HEK293 (cell line): ENCODE measurements at regions of chr17 and their contacts with region 1.

Region 1: DNA sequence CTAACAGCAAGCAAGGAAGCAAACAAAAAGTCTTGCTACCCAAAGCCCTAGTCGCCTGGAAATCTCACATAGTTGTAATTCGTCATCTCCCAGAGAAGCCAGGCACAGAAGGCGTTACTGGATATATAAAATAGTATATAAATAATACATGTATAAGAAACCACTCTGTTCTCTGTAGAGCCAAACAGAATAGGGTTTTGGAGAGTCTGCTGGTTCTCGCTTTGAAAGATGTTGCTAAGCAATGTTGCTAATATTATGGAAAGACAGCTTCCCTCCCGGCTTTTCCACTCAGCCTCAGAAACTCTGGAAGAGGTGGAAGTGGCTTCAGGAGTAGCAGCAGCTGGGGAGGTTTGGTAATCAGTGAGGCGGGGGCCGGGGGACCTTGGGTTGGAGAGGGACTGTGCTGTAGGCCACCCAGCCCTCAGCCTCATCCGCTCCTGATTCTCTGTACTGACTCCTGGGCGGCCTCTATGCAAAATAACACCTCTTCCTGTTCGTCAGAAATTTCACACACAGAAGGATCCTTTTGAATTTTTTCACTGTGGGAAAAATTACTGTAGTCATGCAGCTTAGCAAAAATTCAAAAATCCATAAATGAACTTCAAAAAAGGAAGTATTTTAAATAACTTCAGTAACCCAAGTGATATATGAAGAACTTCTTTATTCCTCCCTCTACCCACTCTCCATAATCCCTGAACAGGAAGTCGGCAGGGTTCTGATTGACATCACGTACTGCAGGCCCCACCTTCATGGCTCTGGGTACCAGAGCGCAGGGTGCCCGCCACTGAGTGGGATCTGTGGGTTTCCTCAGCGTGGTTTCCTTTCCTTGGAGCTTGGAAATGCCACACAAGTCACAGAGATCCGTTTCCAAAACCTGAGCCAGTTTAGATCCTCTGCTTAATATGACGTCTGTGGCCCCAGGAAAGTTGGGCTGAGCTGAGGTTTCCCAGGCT is 51.4 kb downstream of the RAP1GAP2 start:
- H3K4me3 ChIP-seq: no peak overlapping the region
- H3K27ac ChIP-seq: no peak overlapping the region
- H3K4me1 ChIP-seq: no peaks in the 10 kb centered on the region
- CTCF ChIP-seq: no peak

Region 2: GRCh38 chr17:2828397-2829038 is 19.1 kb before region 1 on chr17:
- CTCF ChIA-PET with region 1: interaction called, 17 read pairs
- POLR2A ChIA-PET with region 1: interaction called, 3 read pairs
- H3K4me3 ChIP-seq: no peak overlapping the region
- H3K27ac ChIP-seq: no peak overlapping the region
- H3K4me1 ChIP-seq: no peaks in the 10 kb centered on the region
- CTCF ChIP-seq: peak; percentile 94

Region 3: GRCh38 chr17:2860045-2860444 is 12.4 kb after region 1 on chr17:
- CTCF ChIA-PET with region 1: interaction called, 22 read pairs
- POLR2A ChIA-PET with region 1: interaction called, 3 read pairs
- H3K4me3 ChIP-seq: no peak overlapping the region
- H3K27ac ChIP-seq: no peak overlapping the region
- H3K4me1 ChIP-seq: no peaks in the 10 kb centered on the region
- CTCF ChIP-seq: no peak

Region 4: GRCh38 chr17:2929881-2930533 is 82.3 kb after region 1 on chr17:
- CTCF ChIA-PET with region 1: interaction called, 94 read pairs
- POLR2A ChIA-PET with region 1: interaction called, 6 read pairs
- H3K4me3 ChIP-seq: no peak overlapping the region
- H3K27ac ChIP-seq: no peak overlapping the region
- H3K4me1 ChIP-seq: no peaks in the 10 kb centered on the region
- CTCF ChIP-seq: no peak

Region 5: GRCh38 chr17:3004133-3004801 is 156.6 kb after region 1 on chr17:
- CTCF ChIA-PET with region 1: interaction called, 12 read pairs
- POLR2A ChIA-PET with region 1: interaction called, 6 read pairs
- H3K4me3 ChIP-seq: peak overlapping the region; percentile 10
- H3K27ac ChIP-seq: peak overlapping the region; percentile 83
- H3K4me1 ChIP-seq: peaks cover 11% of the 10 kb centered on the region
- CTCF ChIP-seq: no peak

Region 6: DNA sequence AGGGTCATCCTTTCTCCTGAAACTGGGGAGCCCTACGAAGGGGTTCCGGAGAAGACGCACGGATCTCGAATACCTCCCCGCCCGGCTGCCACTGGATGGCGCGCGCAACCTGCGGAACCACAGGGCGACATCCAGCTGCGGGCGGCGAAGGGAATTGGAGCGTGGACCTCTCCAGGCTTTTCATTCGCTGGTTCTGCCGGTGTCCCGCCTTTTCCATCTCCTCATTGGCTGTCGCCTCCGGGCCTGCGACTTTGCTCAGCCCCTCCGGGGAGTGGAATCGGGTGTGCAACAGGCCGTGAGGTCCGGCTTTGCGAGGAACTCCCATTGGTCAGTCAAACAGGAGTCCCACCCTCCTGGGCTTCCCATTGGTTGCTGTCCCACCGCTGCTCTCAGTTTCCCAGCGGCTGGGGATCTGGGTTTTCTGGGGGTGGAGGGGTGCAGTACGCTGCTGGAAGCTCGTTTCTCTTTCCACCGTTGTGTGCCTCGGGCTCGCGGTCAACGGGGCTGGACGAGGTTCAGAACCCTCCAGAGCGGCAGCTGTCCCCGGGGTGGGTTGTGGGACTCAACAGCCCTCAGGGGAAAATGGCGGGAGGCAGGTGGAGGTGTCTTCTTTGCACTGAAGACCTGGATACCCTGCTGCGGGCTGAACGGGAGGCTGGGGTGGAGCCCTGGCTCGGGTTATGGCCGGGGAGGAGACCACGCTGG is 201.3 kb after region 1 on chr17:
- CTCF ChIA-PET with region 1: interaction called, 13 read pairs
- POLR2A ChIA-PET with region 1: no interaction called
- H3K4me3 ChIP-seq: peak overlapping the region; percentile 62
- H3K27ac ChIP-seq: peak overlapping the region; percentile 27; the same call in 1 of the 2 replicates
- H3K4me1 ChIP-seq: peaks cover 2% of the 10 kb centered on the region; the same call in 1 of the 2 replicates
- CTCF ChIP-seq: peak; percentile 97